Naive thymus-derived CD4-positive, alpha-beta T cell (primary cell): ENCODE measurements at regions of chr4 and their contacts with region 1.

Region 1: GRCh38 chr4:2186133-2186864 is 55.6 kb downstream of the HAUS3 start:
- DNase-seq: peak in 1 of 9 donors; percentile 2
- ATAC-seq: no peak
- H3K4me3 ChIP-seq: no peak overlapping the region
- H3K4me3 Mint-ChIP-seq: no peak overlapping the region
- H3K27ac ChIP-seq: no peak overlapping the region
- H3K27ac Mint-ChIP-seq: no peak overlapping the region
- H3K4me1 ChIP-seq: no peaks in the 10 kb centered on the region
- H3K4me1 Mint-ChIP-seq: peaks cover 0 to 24% (median 0%) of the 10 kb centered on the region in 7 donors
- H3K27me3 ChIP-seq: no peaks in the 10 kb centered on the region
- H3K27me3 Mint-ChIP-seq: peaks cover 0 to 2% (median 0%) of the 10 kb centered on the region in 5 donors

Region 2: DNA sequence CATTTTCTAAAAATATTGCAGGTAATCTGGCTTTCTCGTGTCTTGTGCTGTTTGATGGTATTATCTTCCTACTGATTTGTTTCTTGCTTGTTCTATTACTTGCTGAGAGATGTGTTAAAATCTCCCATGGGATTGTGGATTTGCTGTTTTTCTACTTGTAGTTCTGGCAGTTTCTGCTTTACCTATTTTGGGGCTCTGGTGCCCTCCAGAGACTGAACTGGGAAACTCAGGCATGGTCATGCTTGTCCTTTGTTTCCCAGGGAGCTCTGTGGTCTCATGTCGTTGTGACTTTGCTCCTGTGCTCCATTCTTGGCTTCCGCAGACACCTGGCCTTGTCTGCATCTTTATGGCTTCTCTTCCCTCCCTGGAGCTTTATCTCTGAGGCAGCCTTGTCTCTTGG is 275.7 kb before region 1 on chr4:
- CTCF ChIA-PET with region 1: no interaction called
- POLR2A ChIA-PET with region 1: no interaction called
- intact Hi-C with region 1: loop called in 1 of 2 experiments (anchors 5 kb)
- DNase-seq: no peak
- ATAC-seq: no peak
- H3K4me3 ChIP-seq: no peak overlapping the region
- H3K4me3 Mint-ChIP-seq: no peak overlapping the region
- H3K27ac ChIP-seq: no peak overlapping the region
- H3K27ac Mint-ChIP-seq: peak overlapping the region in 5 of 9 donors; percentile 6 to 62 (median 12)
- H3K4me1 ChIP-seq: no peaks in the 10 kb centered on the region
- H3K4me1 Mint-ChIP-seq: peaks cover 3 to 48% (median 19%) of the 10 kb centered on the region in 7 donors
- H3K27me3 ChIP-seq: no peaks in the 10 kb centered on the region
- H3K27me3 Mint-ChIP-seq: no peaks in the 10 kb centered on the region

Region 3: GRCh38 chr4:2910409-2910808 is 724.1 kb after region 1 on chr4:
- CTCF ChIA-PET with region 1: no interaction called
- POLR2A ChIA-PET with region 1: no interaction called
- intact Hi-C with region 1: no loop called
- DNase-seq: no peak
- ATAC-seq: no peak
- H3K4me3 ChIP-seq: no peak overlapping the region
- H3K4me3 Mint-ChIP-seq: no peak overlapping the region
- H3K27ac ChIP-seq: no peak overlapping the region
- H3K27ac Mint-ChIP-seq: peak overlapping the region in 2 of 9 donors; percentile 15 to 34
- H3K4me1 ChIP-seq: peaks cover 15 to 20% of the 10 kb centered on the region in 2 donors
- H3K4me1 Mint-ChIP-seq: peaks cover 14 to 31% (median 23%) of the 10 kb centered on the region in 7 donors
- H3K27me3 ChIP-seq: no peaks in the 10 kb centered on the region
- H3K27me3 Mint-ChIP-seq: no peaks in the 10 kb centered on the region